ENCODE measurements at regions of chr6 and their contacts with region 1.

Region 1: GRCh38 chr6:160520043-160520904 is 143.8 kb downstream of the LPA start:
- DNase-seq: peak; percentile 58
- H3K4me3 Mint-ChIP-seq: peak overlapping the region; percentile 96
- H3K27ac Mint-ChIP-seq: peak overlapping the region; percentile 87
- H3K4me1 Mint-ChIP-seq: peaks cover 33% of the 10 kb centered on the region
- H3K27me3 Mint-ChIP-seq: no peaks in the 10 kb centered on the region

Region 2: DNA sequence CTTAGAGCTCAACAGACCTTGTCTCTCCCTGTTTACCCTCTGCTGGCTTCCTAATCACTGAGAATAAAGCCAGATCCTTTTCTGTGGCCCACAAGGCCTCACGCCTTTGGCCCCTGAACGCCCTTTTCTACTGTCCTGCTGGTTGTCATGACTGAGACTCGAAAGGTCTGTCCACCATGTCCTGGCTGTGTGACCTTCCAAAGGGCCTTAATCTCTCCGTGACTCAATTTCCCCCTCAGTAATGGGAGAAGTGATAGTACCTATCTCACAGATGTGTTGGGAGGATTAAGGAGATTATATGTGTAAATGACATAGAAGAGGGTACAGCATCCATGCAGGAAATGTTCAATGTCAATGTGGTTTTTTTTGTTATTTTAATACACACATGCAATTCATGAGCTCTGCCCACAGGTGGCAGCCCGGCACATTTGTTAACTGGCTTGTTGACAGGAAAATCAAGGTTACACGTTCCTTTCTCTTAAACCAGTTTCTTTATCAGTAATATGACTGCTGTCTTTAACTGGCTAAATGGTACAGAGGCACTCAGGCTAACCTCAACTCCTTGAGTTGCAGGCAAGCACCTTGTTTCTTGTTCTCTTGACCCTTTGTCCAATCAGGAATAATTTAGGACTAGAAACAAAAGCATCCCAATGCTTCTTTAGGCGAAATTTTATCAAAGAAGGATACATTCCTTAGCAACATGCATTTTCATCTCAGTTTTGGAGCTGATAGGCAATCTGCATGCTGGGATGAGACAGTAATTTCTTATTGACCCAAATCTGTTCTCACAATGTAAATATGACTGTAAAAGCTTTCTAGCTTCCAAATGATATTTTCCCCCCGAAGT is 382.1 kb before region 1 on chr6:
- CTCF ChIA-PET with region 1: interaction called, 5 read pairs
- POLR2A ChIA-PET with region 1: no interaction called
- intact Hi-C with region 1: loop called (anchors 2 kb)
- DNase-seq: peak; percentile 79
- H3K4me3 Mint-ChIP-seq: no peak overlapping the region
- H3K27ac Mint-ChIP-seq: no peak overlapping the region
- H3K4me1 Mint-ChIP-seq: peaks cover 19% of the 10 kb centered on the region
- H3K27me3 Mint-ChIP-seq: no peaks in the 10 kb centered on the region

Region 3: GRCh38 chr6:160462551-160463109 is 57.6 kb before region 1 on chr6:
- CTCF ChIA-PET with region 1: interaction called, 13 read pairs
- POLR2A ChIA-PET with region 1: no interaction called
- intact Hi-C with region 1: loop called (anchors 1 kb)
- DNase-seq: peak; percentile 64
- H3K4me3 Mint-ChIP-seq: peak overlapping the region; percentile 42
- H3K27ac Mint-ChIP-seq: peak overlapping the region; percentile 68
- H3K4me1 Mint-ChIP-seq: peaks cover 72% of the 10 kb centered on the region
- H3K27me3 Mint-ChIP-seq: peaks cover 14% of the 10 kb centered on the region

Region 4: GRCh38 chr6:160507420-160507819 is 12.9 kb before region 1 on chr6:
- CTCF ChIA-PET with region 1: interaction called, 15 read pairs
- POLR2A ChIA-PET with region 1: interaction called, 3 read pairs
- intact Hi-C with region 1: no loop called
- DNase-seq: no peak
- H3K4me3 Mint-ChIP-seq: no peak overlapping the region
- H3K27ac Mint-ChIP-seq: no peak overlapping the region
- H3K4me1 Mint-ChIP-seq: no peaks in the 10 kb centered on the region
- H3K27me3 Mint-ChIP-seq: no peaks in the 10 kb centered on the region

Region 5: GRCh38 chr6:160534050-160534696 is 13.9 kb after region 1 on chr6:
- CTCF ChIA-PET with region 1: interaction called, 163 read pairs
- POLR2A ChIA-PET with region 1: no interaction called
- intact Hi-C with region 1: loop called (anchors 1 kb)
- DNase-seq: peak; percentile 69
- H3K4me3 Mint-ChIP-seq: no peak overlapping the region
- H3K27ac Mint-ChIP-seq: no peak overlapping the region
- H3K4me1 Mint-ChIP-seq: no peaks in the 10 kb centered on the region
- H3K27me3 Mint-ChIP-seq: no peaks in the 10 kb centered on the region

Region 6: DNA sequence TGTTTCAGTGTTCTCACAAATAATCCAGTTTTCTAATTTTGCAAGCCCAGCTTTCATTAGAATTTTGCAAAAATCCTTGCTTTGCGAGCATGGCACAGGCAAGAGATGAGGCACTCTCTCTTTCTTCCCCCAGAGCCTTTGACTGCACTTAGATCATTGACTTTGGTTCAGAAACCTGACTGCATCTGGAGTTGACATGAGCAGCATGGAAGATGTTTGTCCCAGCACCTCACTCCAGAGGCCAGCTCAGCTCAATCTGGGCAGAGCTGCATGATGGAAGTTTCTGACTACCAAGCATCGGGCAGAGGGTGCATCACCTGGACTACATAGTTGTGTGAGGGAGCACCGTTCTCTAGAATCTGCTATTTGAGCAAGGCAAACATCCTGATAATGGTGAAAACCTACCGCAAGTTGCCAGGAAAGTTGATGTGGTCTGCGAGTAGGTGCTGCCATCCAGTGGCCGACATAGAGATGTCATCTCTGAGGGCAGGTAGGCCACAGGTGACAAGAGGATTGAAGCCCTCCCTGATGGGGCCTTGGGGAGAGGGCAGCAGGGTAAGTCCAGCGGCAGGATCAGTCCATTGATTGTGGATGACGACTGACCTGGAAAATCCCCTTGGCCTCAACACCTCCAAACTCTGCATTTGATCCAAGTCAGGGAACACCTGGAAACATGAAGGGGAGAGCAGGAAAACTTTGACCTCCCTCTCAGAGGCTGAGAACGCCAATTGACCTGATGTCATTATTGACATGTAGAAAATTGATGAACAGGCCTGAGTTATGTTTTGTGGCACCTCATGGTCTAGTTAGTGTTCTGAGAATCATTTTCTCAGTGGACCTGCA is 147.6 kb after region 1 on chr6:
- CTCF ChIA-PET with region 1: interaction called, 13 read pairs
- POLR2A ChIA-PET with region 1: no interaction called
- intact Hi-C with region 1: loop called (anchors 1 kb)
- DNase-seq: peak; percentile 61
- H3K4me3 Mint-ChIP-seq: no peak overlapping the region
- H3K27ac Mint-ChIP-seq: no peak overlapping the region
- H3K4me1 Mint-ChIP-seq: no peaks in the 10 kb centered on the region
- H3K27me3 Mint-ChIP-seq: peaks cover 7% of the 10 kb centered on the region

Region 7: DNA sequence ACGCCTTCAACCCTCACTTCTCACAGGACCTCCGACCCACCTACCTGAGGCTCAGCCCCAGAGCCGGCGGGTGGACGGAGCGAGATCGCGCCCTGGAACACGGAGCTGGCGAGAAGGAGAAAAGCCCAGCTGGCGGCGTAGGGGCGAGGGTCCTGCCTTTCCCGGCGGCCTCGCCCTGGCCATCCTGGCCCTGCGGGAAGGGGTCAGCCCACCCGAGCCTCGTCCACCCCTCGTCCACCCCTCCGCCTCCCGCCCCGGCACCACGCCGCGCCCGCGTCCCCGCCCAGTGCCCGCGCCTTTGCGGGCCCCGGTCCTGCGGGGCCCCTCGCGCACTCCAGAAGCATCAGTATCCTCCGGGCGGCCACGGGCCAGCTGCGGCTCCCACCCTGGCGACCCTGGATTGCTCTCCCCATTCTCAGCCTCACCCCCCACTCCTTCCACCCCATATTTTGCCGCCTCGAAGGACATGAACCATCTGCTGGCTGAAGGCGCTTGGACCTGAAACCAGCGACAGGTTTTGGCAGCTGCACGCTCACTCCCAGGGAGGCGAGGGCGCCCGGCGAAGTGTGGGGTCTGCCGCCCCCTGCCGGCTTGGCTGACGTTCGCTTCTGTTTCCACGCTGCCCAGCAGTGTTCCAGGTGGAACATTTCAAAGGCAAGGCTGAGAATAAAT is 246.9 kb after region 1 on chr6:
- CTCF ChIA-PET with region 1: no interaction called
- POLR2A ChIA-PET with region 1: no interaction called
- intact Hi-C with region 1: loop called (anchors 2 kb)
- DNase-seq: peak; percentile 69
- H3K4me3 Mint-ChIP-seq: peak overlapping the region; percentile 63
- H3K27ac Mint-ChIP-seq: no peak overlapping the region
- H3K4me1 Mint-ChIP-seq: peaks cover 8% of the 10 kb centered on the region
- H3K27me3 Mint-ChIP-seq: peaks cover 21% of the 10 kb centered on the region